ENCODE measurements at regions of chr14 and their contacts with region 1.

Region 1: GRCh38 chr14:23057757-23058653 is 685 bp upstream of the CDH24 start:
- DNase-seq: peak; percentile 94
- H3K4me3 Mint-ChIP-seq: peak overlapping the region; percentile 69
- H3K27ac Mint-ChIP-seq: no peak overlapping the region
- H3K4me1 Mint-ChIP-seq: peaks cover 35% of the 10 kb centered on the region
- H3K27me3 Mint-ChIP-seq: no peaks in the 10 kb centered on the region
- CTCF ChIP-seq: peak; percentile 89

Region 2: GRCh38 chr14:22929104-22929847 is 128.7 kb before region 1 on chr14 and contains the start of gene PRMT5:
- CTCF ChIA-PET with region 1: no interaction called
- intact Hi-C with region 1: loop called (anchors 1 kb)
- DNase-seq: peak; percentile 97
- H3K4me3 Mint-ChIP-seq: no peak within 1 kb of the TSS
- H3K27ac Mint-ChIP-seq: no peak within 1 kb of the TSS
- H3K4me1 Mint-ChIP-seq: peaks cover 9% of the 10 kb centered on the region
- H3K27me3 Mint-ChIP-seq: no peaks in the 10 kb centered on the region
- CTCF ChIP-seq: no peak
- total RNA-seq, gene PRMT5: 101 and 113 TPM in 2 replicates

Region 3: GRCh38 chr14:22994762-22995275 is 63.2 kb before region 1 on chr14:
- CTCF ChIA-PET with region 1: interaction called, 20 read pairs
- intact Hi-C with region 1: no loop called
- DNase-seq: no peak
- H3K4me3 Mint-ChIP-seq: no peak overlapping the region
- H3K27ac Mint-ChIP-seq: no peak overlapping the region
- H3K4me1 Mint-ChIP-seq: no peaks in the 10 kb centered on the region
- H3K27me3 Mint-ChIP-seq: no peaks in the 10 kb centered on the region
- CTCF ChIP-seq: peak; percentile 42

Region 4: GRCh38 chr14:23068476-23069412 is 10.7 kb after region 1 on chr14:
- CTCF ChIA-PET with region 1: interaction called, 14 read pairs
- intact Hi-C with region 1: no loop called
- DNase-seq: peak; percentile 82
- H3K4me3 Mint-ChIP-seq: no peak overlapping the region
- H3K27ac Mint-ChIP-seq: no peak overlapping the region
- H3K4me1 Mint-ChIP-seq: peaks cover 36% of the 10 kb centered on the region
- H3K27me3 Mint-ChIP-seq: no peaks in the 10 kb centered on the region
- CTCF ChIP-seq: peak; percentile 90

Region 5: DNA sequence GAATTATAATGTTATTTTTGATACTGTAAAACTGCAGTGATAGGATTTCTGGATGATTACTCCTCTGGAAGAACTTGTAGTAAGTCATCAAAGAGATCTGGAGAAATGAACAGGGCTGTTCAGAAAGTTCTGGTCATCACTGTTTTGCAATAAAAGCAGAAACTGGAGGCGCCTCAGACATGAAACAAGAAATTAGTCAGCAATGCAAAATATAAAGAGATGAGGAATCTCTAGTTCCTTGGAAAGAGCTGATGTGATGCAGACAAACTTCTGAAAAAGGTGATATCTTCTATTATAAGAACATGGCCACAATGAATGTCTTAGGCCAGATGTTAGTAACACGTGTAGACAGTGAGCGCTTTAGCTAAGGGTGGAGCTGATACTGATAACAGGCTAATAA is 27.5 kb after region 1 on chr14:
- CTCF ChIA-PET with region 1: no interaction called
- intact Hi-C with region 1: no loop called
- DNase-seq: no peak
- H3K4me3 Mint-ChIP-seq: no peak overlapping the region
- H3K27ac Mint-ChIP-seq: no peak overlapping the region
- H3K4me1 Mint-ChIP-seq: peaks cover 14% of the 10 kb centered on the region
- H3K27me3 Mint-ChIP-seq: no peaks in the 10 kb centered on the region
- CTCF ChIP-seq: no peak